Activated T-helper 2 cell treated with anti-CD3 and anti-CD28 coated beads, Interferon-gamma antibody, Interleukin-2, Interleukin-4, amounts not matched to agents 10 μg/mL and 5 μg/mL and 100 μg/mL, durations not matched to agents 14 hours and 24 hours and 36 hours (primary cell): ENCODE measurements at regions of chr10 and their contacts with region 1.

Region 1: GRCh38 chr10:71812016-71812912 is 38.8 kb downstream of the PSAP start:
- DNase-seq: peak; percentile 55
- H3K4me3 Mint-ChIP-seq: no peak overlapping the region
- H3K27ac Mint-ChIP-seq: no peak overlapping the region
- H3K4me1 Mint-ChIP-seq: no peaks in the 10 kb centered on the region
- H3K27me3 Mint-ChIP-seq: no peaks in the 10 kb centered on the region

Region 2: DNA sequence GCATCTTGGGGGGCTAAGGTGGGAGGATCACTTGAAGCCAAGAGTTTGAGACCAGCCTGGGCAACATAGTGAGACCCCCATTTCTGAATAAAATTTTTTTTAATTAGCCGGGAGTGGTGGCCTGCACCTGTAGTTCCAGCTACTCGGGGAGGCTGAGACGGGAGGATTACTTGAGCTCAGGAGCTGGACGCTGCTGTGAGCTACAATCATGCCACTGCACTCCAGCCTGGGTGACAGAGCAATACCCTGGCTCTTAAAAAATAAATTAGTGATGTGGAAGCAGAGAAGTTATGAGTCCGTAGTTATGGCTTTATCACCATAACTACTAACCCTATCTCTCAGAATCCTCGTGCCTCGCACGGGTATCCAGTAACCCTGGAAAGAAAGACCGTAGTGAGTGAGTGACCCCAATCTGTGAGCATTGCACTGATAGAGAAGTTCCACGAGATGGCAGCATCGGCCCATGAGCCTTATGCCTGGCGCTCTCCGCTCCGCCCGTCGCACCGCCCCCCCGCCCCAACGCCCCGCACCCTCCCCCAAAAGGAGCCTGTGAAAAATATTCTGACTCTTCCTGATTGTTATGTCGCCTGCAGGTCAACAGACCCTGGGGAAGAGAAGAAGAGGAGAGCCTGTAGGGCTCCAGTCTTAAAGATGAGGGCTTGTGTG is 498.1 kb before region 1 on chr10:
- intact Hi-C with region 1: loop called (anchors 1 kb)
- DNase-seq: peak; percentile 40
- H3K4me3 Mint-ChIP-seq: no peak overlapping the region
- H3K27ac Mint-ChIP-seq: no peak overlapping the region
- H3K4me1 Mint-ChIP-seq: peaks cover 23% of the 10 kb centered on the region
- H3K27me3 Mint-ChIP-seq: peaks cover 15% of the 10 kb centered on the region

Region 3: GRCh38 chr10:71383972-71384687 is 428.1 kb before region 1 on chr10:
- intact Hi-C with region 1: loop called (anchors 10 kb)
- DNase-seq: peak; percentile 64
- H3K4me3 Mint-ChIP-seq: no peak overlapping the region
- H3K27ac Mint-ChIP-seq: no peak overlapping the region
- H3K4me1 Mint-ChIP-seq: no peaks in the 10 kb centered on the region
- H3K27me3 Mint-ChIP-seq: peaks cover 18% of the 10 kb centered on the region

Region 4: GRCh38 chr10:71696628-71697326 is 115.5 kb before region 1 on chr10:
- intact Hi-C with region 1: loop called (anchors 5 kb)
- DNase-seq: peak; percentile 48
- H3K4me3 Mint-ChIP-seq: no peak overlapping the region
- H3K27ac Mint-ChIP-seq: no peak overlapping the region
- H3K4me1 Mint-ChIP-seq: peaks cover 28% of the 10 kb centered on the region
- H3K27me3 Mint-ChIP-seq: no peaks in the 10 kb centered on the region